Endothelial cell of umbilical vein (primary cell): ENCODE measurements at regions of chr15 and their contacts with region 1.

Region 1: DNA sequence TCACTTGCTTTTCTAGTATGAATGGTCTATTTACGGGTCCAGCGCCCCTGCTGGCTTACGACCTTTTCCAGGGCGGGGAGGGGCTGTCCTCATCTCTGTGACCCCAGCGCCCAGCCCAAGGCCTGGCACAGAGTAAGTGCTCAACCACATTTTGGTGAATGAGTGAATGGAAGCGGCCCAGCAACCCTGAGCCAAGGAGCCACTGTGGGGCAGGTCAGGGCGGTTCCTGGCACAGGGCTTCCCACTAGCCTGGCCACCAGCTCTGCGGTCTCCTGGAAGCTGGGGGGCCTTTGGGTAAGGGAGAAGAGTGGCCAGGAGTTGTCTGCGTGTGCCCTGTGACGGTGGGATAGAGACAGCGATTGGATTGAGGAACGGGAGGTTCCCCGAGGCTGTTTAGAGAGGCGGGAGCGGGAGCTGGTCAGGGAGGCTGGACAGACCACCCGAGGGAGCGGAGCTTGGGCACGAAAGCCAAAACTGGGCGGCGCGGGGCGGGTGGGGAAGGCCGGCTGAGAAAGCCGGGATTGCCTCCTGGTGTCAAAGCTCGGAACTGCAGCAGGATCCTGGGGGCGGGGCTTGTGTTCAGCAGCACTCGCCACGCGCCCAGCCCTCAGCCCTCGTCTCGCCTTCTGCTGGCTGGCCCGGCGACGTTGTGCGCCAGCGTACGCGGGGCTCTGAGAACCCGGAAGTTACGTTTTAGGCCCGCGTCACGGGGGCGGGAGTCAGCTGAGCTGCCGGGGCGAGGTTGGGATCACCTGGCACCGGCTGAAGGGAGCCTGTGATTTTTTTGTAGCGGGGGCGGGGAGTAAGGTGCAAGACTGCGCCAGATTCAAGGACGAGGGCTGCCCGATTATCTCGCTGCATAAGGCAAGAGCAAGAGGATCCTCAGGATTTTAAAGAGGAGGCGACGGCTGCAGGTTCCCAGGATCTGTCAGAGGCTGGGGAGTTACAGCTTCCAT is at the start of gene VPS18:
- DNase-seq: peak; percentile 96
- H3K4me3 ChIP-seq: peak within 1 kb of the TSS; percentile 86 to 91 (median 88)
- H3K27ac ChIP-seq: peak within 1 kb of the TSS; percentile 86
- H3K4me1 ChIP-seq: peaks cover 14% of the 10 kb centered on the region
- H3K27me3 ChIP-seq: no peaks in the 10 kb centered on the region
- CTCF ChIP-seq: peak; percentile 77 to 95
- POLR2A ChIP-seq: peak; percentile 60
- total RNA-seq, gene VPS18: 32.8 and 33.3 TPM in 2 replicates

Region 2: DNA sequence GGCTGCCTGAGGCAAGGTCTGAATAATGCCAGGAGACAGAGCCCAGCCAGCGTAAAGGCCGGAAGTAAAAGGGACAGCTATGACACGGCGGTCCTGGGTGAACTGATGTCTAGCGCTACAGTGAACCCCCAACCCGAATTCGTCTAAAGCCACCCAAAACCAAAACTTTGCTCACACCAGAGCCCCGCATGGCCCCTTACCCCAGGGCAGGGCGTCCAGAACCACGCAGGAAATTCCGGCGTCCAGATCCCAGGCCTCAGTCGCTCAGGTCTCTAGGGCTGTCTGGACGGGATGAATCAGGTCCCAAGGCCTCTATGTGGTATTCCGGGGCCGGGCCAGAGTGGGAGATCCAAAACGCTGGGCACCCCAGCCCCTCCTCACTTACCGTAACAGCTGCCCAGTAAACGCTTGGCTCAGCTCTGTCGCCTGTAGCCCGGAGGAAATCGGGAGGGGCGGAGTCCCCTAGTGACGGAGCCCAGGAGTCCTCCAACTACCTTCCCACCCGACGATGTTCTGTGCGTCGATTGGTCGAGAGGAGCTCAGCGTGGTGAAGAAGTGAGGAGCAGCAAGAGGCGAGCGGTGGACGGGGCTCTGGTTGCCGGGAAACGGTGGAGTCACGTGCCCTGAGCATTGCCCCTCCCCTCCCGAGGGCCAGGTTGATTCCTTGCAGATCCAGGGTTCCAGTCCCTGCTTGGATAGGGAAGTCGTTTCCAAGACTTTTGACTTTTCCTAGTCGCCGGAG is 329.2 kb before region 1 on chr15 and contains the start of gene CCDC32:
- CTCF ChIA-PET with region 1: interaction called, 5 read pairs
- POLR2A ChIA-PET with region 1: no interaction called
- dilution Hi-C with region 1: no loop called
- intact Hi-C with region 1: loop called (anchors 10 kb)
- DNase-seq: peak; percentile 99
- H3K4me3 ChIP-seq: peak within 1 kb of the TSS; percentile 62 to 90 (median 86)
- H3K27ac ChIP-seq: peak within 1 kb of the TSS; percentile 80
- H3K4me1 ChIP-seq: peaks cover 13% of the 10 kb centered on the region
- H3K27me3 ChIP-seq: no peaks in the 10 kb centered on the region
- CTCF ChIP-seq: no peak
- POLR2A ChIP-seq: peak; percentile 91
- total RNA-seq, gene CCDC32: 22.9 and 28.8 TPM in 2 replicates

Region 3: DNA sequence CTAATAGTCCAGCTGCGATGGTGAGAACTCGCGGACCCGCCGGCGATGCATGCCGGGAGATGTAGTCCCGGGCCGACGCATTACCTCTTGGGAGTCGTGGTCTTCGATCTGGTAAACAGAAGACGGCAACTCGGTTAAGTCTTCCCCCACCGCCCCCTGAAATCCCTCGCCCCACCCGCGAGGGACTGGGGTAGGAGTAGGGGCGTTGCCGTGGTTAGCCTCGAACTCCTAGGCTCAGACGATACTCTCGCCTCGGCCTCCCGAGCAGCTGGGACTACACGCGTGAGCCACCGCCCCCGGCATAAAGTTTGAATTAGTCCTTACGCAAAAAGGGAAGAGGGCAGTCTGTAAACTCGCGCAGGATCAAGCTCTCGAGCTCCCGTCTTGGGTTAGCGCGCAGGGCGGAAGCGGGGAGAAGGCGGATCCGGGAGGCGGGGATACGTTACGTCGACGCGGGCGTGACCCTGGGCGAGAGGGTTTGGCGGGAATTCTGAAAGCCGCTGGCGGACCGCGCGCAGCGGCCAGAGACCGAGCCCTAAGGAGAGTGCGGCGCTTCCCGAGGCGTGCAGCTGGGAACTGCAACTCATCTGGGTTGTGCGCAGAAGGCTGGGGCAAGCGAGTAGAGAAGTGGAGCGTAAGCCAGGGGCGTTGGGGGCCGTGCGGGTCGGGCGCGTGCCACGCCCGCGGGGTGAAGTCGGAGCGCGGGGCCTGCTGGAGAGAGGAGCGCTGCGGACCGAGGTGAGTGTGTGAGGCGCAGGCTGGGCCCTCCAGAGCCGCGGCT is 199.1 kb before region 1 on chr15 and contains the start of gene RAD51:
- CTCF ChIA-PET with region 1: interaction called, 12 read pairs
- POLR2A ChIA-PET with region 1: no interaction called
- dilution Hi-C with region 1: no loop called
- intact Hi-C with region 1: loop called (anchors 5 kb)
- DNase-seq: peak; percentile 95
- H3K4me3 ChIP-seq: peak within 1 kb of the TSS; percentile 69 to 96 (median 92)
- H3K27ac ChIP-seq: peak within 1 kb of the TSS; percentile 86
- H3K4me1 ChIP-seq: peaks cover 13% of the 10 kb centered on the region
- H3K27me3 ChIP-seq: no peaks in the 10 kb centered on the region
- CTCF ChIP-seq: no peak
- POLR2A ChIP-seq: peak; percentile 63
- total RNA-seq, gene RAD51: 29.7 and 30.9 TPM in 2 replicates

Region 4: DNA sequence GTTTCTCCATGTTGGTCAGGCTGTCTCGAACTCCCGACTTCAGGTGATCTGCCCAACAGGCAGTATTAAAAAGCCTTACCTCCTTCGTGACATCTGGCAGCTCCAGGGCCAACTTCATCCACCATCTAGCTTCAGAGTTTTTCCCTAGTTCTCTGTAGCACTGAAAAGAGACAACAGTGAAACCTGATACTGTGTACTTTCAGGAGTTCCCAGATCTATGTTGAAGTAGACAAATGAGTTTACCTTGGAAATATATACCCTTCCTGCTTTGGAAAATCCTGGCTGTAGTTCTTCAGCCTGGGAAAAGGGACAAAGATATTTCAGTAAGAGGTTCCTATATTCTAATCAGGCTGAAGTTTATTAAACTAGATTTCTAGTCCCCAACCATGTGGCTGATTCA is 157.0 kb before region 1 on chr15:
- CTCF ChIA-PET with region 1: no interaction called
- POLR2A ChIA-PET with region 1: no interaction called
- dilution Hi-C with region 1: no loop called
- intact Hi-C with region 1: no loop called
- DNase-seq: no peak
- H3K4me3 ChIP-seq: no peak overlapping the region
- H3K27ac ChIP-seq: no peak overlapping the region
- H3K4me1 ChIP-seq: no peaks in the 10 kb centered on the region
- H3K27me3 ChIP-seq: no peaks in the 10 kb centered on the region
- CTCF ChIP-seq: no peak
- POLR2A ChIP-seq: no peak

Region 5: GRCh38 chr15:40754883-40755811 is 138.9 kb before region 1 on chr15 and contains the start of gene RMDN3:
- CTCF ChIA-PET with region 1: no interaction called
- POLR2A ChIA-PET with region 1: no interaction called
- dilution Hi-C with region 1: no loop called
- intact Hi-C with region 1: loop called (anchors 2 kb)
- DNase-seq: peak; percentile 94
- H3K4me3 ChIP-seq: peak within 1 kb of the TSS; percentile 70 to 82 (median 71)
- H3K27ac ChIP-seq: peak within 1 kb of the TSS; percentile 71
- H3K4me1 ChIP-seq: peaks cover 8% of the 10 kb centered on the region
- H3K27me3 ChIP-seq: no peaks in the 10 kb centered on the region
- CTCF ChIP-seq: no peak
- POLR2A ChIP-seq: peak; percentile 81
- total RNA-seq, gene RMDN3: 35.9 and 37.2 TPM in 2 replicates

Region 6: DNA sequence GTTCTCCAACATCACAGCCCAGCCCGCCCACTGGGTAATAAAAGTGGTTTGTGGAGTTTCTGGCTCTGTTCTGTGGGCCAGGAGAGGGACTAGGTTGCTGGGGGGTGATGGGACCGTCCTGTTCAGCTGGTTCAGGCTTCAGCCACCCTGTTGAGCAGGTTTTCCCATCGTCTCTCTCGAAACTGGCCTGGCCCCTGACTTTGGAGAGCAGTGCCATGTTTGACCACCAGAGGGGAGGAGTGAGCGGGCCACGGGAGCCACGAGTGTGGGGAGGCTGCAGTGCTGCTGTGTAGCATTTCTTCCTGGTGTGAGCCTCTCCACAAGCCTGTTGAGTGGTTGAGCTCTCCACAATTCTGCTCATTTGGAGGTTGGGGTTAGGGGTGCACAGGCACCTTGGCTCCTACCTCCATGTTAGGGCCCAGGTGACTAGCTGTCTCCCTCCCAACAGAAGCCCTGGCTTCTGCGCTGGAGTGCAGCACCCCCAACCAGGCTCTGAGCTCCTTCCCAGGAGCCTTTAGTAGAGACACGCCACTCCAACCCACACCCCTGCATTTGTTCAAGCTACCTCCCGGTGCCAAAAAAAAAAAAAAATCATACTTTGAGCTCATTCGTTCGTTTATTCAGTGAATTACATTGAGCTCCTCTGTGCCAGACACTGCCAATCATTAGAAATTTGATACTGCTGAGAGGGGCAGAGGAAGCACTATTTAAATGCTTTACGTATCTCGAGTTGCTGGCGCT is 36.2 kb before region 1 on chr15:
- CTCF ChIA-PET with region 1: interaction called, 251 read pairs
- POLR2A ChIA-PET with region 1: interaction called, 5 read pairs
- dilution Hi-C with region 1: no loop called
- intact Hi-C with region 1: loop called (anchors 1 kb)
- DNase-seq: peak; percentile 67
- H3K4me3 ChIP-seq: no peak overlapping the region
- H3K27ac ChIP-seq: no peak overlapping the region
- H3K4me1 ChIP-seq: no peaks in the 10 kb centered on the region
- H3K27me3 ChIP-seq: no peaks in the 10 kb centered on the region
- CTCF ChIP-seq: peak; percentile 92 to 99
- POLR2A ChIP-seq: no peak

Region 7: DNA sequence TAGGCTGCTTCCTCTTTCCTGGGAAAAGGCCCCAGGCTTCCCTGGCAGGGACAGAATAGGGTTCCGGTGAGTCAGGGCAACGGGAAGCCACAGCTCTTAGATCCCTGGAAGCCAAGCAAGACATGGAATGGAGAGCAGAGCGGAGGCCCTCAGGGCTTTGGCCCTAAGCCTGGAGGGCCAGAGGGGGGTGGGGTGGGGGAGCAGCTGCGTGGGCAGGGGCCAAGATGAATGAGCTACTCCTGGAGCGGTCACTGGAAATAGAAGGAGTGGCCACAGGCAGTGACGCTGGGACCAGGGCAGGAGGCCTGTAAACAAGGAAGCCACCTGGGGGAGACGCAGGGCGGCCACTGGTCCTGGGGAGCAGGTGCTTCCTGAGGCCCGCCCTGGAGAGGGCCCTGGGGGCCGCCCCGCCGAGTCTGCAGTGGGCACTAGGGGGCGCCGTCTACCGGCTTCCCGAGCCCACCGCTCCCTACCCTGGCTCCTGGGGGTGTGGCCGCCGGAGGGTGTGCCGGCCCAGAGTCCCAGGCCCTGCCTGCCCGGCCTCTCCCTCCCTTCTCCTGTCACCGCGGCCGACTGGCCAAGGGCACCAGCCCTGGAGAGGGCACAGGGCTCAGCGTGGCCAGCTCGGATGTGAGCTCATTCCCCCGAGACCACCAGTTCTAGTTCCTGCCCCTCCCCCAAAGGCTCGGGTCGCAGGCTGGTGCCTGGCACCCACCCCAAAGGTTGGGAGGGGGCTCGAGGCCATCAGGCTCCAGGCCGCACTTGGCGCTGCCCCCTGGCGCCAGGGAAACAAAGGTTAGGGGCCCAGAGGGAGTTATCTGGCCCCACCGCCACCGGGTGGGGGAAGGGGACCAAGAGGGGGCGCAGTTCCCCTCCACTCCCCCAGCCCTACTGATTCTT is 12.3 kb after region 1 on chr15:
- CTCF ChIA-PET with region 1: interaction called, 22 read pairs
- POLR2A ChIA-PET with region 1: interaction called, 3 read pairs
- dilution Hi-C with region 1: no loop called
- intact Hi-C with region 1: no loop called
- DNase-seq: peak; percentile 98
- H3K4me3 ChIP-seq: peak overlapping the region in 2 of 3 experiments; percentile 9 to 13
- H3K27ac ChIP-seq: peak overlapping the region; percentile 88
- H3K4me1 ChIP-seq: peaks cover 30% of the 10 kb centered on the region
- H3K27me3 ChIP-seq: no peaks in the 10 kb centered on the region
- CTCF ChIP-seq: peak; percentile 89 to 99
- POLR2A ChIP-seq: peak; percentile 67